ENCODE measurements at regions of chr5 and their contacts with region 1.

Region 1: DNA sequence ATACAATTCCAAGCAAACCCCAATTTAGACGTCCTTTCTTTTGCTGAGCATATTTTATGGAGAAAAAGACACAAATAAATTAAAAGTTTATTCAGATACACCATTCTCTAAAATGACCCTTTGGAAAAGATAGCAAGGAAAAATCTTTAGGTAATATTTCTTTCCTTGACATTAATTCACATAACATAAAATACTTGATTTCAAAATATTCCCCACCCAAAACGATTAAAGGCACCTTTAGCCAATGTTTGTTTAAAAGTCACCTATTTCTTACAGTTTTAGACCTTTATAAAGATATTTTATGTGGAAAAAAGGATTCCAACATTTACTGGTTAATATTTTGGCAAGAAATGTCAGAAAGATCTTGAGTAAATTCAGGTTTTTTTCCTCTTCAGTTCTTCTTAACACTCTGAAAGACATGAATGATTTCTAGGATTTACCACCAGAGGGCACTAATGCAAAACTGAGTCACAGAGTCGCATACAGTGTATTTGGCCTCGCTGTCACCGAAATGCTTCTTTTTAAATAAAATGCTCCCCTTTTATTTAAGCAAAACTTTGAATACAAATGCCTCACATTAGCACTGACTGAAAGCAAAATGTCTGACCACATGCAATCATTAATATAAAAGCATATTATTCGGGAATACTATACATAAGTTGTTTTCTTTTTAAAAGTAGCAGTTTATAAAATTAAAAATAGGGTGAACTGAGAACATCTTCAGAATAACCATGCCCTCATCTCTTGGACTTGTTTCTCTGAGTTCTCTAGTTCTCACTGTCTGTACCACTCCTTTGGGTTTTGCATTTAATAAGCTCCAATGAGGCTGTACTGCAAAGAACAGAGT is 122.5 kb downstream of the SLC1A3 start:
- DNase-seq: peak; percentile 59

Region 2: GRCh38 chr5:36599986-36600779 is 128.7 kb before region 1 on chr5:
- CTCF ChIA-PET with region 1: no interaction called
- POLR2A ChIA-PET with region 1: no interaction called
- DNase-seq: no peak

Region 3: DNA sequence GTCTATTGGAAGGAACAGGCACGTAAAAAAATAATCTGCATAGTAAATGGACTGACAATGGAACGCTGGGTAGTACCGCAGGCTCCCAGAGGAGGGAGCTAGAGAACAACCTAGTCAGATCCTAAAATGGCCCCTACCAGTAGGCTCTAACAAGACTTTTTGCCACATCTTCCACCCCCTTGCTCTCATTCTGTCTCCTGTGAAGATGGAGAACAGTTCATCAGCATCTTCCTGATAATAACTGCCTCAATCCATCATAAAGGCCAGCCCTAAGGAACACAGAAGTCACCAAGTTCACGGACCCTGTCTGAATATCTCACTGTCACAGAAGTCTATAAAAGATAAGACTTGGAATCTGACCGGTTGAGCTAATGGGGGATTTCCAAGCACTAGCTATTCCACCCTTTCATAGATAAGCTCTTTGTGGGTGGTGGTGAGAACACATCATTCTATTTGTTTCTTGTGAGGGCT is 10.9 kb after region 1 on chr5:
- CTCF ChIA-PET with region 1: interaction called, 14 read pairs
- POLR2A ChIA-PET with region 1: interaction called, 7 read pairs
- DNase-seq: peak; percentile 70

Measured in HEK293T (cell line).